Gastrocnemius medialis (tissue), 4 donors: ENCODE measurements at regions of chr22 and their contacts with region 1.

Region 1: GRCh38 chr22:29079218-29079901 is 6.5 kb downstream of the KREMEN1 start:
- DNase-seq: no peak
- ATAC-seq: no peak
- H3K4me3 ChIP-seq: no peak overlapping the region
- H3K27ac ChIP-seq: peak overlapping the region; percentile 42 to 71 (median 62)
- H3K4me1 ChIP-seq: peaks cover 24 to 31% of the 10 kb centered on the region in 2 donors
- H3K27me3 ChIP-seq: no peaks in the 10 kb centered on the region
- CTCF ChIP-seq: no peak
- POLR2A ChIP-seq: no peak

Region 2: DNA sequence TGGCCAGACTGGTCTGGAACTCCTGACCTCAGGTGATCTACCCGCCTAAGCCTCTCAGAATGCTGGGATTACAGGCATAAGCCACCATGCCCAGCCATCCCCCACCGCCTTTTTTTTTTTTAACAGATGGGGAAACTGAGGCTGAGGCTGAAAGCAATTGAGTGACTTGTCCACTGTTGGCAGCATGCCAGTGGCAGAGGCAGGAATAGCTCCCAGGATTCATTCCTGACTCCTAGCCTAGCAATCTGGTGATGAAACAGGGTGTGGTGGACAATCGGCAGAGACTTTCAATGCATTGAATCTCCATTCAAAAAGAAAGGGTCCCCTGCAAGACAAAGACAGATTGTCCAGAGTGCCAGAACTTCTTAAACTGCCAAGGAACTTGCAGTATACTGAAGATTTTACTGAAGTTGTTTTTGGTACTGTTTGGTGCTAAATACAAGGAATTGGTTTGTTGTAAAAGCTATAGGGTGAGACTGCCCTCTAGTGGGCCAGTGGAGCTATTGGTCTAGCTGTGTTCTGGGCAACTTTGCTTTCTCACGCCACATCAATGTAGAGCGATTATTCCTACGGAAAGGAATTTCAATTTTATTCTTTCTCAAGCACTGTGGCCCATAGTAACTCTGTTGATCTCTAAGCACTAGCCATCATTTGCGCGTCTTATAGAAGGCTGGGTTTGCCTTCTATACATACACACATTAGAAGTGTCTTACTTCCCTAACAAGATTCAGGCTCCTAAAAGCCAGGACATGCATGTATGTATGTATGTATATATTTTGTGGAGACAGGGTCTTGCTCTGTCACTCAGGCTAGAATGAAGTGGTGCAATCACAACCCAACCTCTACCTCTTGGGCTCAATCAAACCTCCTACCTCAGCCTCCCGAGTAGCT is 38.7 kb before region 1 on chr22:
- in situ Hi-C with region 1: no loop called
- intact Hi-C with region 1: no loop called
- DNase-seq: peak; percentile 41 to 44
- ATAC-seq: peak; percentile 53 to 82
- H3K4me3 ChIP-seq: no peak overlapping the region
- H3K27ac ChIP-seq: no peak overlapping the region
- H3K4me1 ChIP-seq: peaks cover 0 to 10% of the 10 kb centered on the region in 2 donors
- H3K27me3 ChIP-seq: no peaks in the 10 kb centered on the region
- CTCF ChIP-seq: peak; percentile 93 to 98 (median 95)
- POLR2A ChIP-seq: no peak

Region 3: GRCh38 chr22:29143941-29144785 is 64.8 kb after region 1 on chr22:
- in situ Hi-C with region 1: loop called in 1 of 4 experiments (anchors 5 kb)
- intact Hi-C with region 1: no loop called
- DNase-seq: peak; percentile 33 to 63
- ATAC-seq: peak; percentile 34 to 55
- H3K4me3 ChIP-seq: peak overlapping the region in 1 of 4 donors; percentile 19
- H3K27ac ChIP-seq: peak overlapping the region; percentile 82 to 96 (median 90)
- H3K4me1 ChIP-seq: peaks cover 54 to 57% of the 10 kb centered on the region in 2 donors
- H3K27me3 ChIP-seq: no peaks in the 10 kb centered on the region
- CTCF ChIP-seq: no peak
- POLR2A ChIP-seq: no peak